H1 (cell line): ENCODE measurements at regions of chr3 and their contacts with region 1.

Region 1: DNA sequence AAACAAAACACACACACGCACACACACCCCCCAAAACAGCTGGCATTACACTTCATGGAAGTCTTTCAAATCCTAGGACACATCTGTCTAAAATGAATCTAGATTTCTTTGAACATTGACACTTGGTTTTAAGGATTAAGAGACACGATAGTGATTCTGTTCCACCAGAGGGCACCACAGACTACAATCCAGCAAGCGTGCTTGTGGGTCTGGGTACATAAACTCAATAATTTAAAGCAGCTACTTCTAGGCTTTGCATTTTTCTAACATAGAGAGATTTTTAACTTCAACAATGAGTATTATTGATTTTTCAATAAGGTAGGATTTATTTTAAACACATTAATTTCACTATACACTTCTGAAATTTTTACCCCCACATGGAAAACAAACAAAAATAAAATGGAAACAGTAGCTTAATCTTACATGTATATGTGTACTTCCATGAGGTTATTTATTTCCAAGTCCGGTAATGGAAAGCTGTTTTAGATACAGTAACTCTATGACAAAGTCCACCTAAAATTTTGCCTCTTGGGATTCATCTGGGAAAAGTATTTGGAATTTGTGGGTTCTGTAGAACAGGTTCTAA is 564.0 kb upstream of the TGFBR2 start:
- DNase-seq: peak in 1 of 2 experiments; percentile 57
- H3K4me3 ChIP-seq: no peak overlapping the region
- H3K27ac ChIP-seq: no peak overlapping the region
- H3K4me1 ChIP-seq: peaks cover 0 to 5% (median 0%) of the 10 kb centered on the region in 4 experiments; a peak in 2 of 7 replicates
- H3K27me3 ChIP-seq: no peaks in the 10 kb centered on the region
- CTCF ChIP-seq: peak in 2 of 3 experiments; percentile 68 to 70; a peak in 3 of 4 replicates
- EP300 ChIP-seq: no peak
- POLR2A ChIP-seq: no peak
- RAD21 ChIP-seq: peak; percentile 90 to 93

Region 2: GRCh38 chr3:29577250-29577649 is 465.1 kb before region 1 on chr3:
- CTCF ChIA-PET with region 1: no interaction called
- POLR2A ChIA-PET with region 1: no interaction called
- DNase-seq: no peak
- H3K4me3 ChIP-seq: no peak overlapping the region
- H3K27ac ChIP-seq: no peak overlapping the region
- H3K4me1 ChIP-seq: no peaks in the 10 kb centered on the region
- H3K27me3 ChIP-seq: no peaks in the 10 kb centered on the region
- CTCF ChIP-seq: no peak
- EP300 ChIP-seq: no peak
- POLR2A ChIP-seq: no peak
- RAD21 ChIP-seq: no peak

Region 3: DNA sequence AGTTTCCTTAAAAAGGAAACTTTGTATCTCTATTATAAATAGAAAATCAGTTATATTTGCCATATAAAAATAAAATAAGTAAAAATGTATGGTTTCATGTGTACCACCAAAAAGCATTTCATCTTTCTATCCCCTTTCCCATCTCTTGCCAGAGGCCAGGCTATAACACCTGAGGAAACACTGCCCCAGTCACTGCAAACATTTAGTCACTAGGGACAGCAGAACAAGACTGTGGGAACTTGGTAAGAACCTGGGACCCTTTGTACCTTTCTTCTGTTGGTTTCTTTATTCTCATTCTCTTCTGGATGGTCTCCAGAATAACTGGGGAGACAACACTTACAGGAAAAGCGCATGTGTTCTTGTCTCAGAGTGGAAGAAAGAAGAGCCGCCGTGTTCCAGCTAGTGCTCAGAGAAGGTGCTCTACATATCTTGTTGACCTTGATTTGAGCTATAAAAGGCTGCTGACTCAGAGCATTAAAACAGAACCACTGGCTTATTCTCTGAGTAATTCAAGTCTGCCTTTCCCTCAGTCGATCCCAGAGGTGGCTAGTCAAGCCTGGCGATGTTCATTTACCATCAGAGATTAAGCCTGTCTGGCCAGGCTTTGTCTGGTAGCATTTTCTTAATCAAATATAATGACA is 399.9 kb before region 1 on chr3:
- CTCF ChIA-PET with region 1: no interaction called
- POLR2A ChIA-PET with region 1: no interaction called
- DNase-seq: no peak
- H3K4me3 ChIP-seq: no peak overlapping the region
- H3K27ac ChIP-seq: no peak overlapping the region
- H3K4me1 ChIP-seq: peaks cover 0 to 8% (median 0%) of the 10 kb centered on the region in 4 experiments; a peak in 2 of 7 replicates
- H3K27me3 ChIP-seq: no peaks in the 10 kb centered on the region
- CTCF ChIP-seq: no peak
- EP300 ChIP-seq: no peak
- POLR2A ChIP-seq: no peak
- RAD21 ChIP-seq: no peak

Region 4: GRCh38 chr3:29955413-29955812 is 87.0 kb before region 1 on chr3:
- CTCF ChIA-PET with region 1: no interaction called
- POLR2A ChIA-PET with region 1: no interaction called
- DNase-seq: no peak
- H3K4me3 ChIP-seq: no peak overlapping the region
- H3K27ac ChIP-seq: no peak overlapping the region
- H3K4me1 ChIP-seq: no peaks in the 10 kb centered on the region
- H3K27me3 ChIP-seq: no peaks in the 10 kb centered on the region
- CTCF ChIP-seq: no peak
- EP300 ChIP-seq: no peak
- POLR2A ChIP-seq: no peak
- RAD21 ChIP-seq: no peak

Region 5: DNA sequence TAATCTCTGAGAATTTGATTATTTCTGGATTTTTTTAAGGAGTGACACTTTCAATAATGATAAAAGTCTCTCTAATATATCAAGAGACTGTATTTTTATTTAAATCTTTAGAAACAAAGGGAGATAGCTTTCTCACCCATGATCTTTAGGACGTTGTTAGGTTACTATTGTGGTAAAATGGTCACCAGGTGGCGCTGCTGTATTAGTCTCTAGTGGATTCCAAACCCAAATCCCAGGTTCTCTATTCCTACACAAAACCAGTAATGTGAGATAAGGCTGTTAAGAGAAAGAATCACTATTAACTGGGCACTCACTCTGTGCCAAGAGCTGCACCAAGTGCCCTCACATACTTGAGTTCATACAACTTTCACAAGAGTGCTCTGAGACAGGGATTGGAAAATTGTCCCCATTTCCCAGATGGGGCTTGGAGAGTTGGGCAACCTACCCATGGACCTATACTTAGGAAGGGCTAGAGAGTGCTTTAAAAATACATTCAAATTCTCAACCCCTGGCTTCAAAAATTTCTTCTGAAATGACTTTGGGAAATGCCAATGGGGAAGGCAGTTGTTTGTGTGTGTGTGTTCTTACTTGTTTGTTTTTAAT is 29.3 kb before region 1 on chr3:
- CTCF ChIA-PET with region 1: interaction called, 13 read pairs
- POLR2A ChIA-PET with region 1: no interaction called
- DNase-seq: peak in 1 of 2 experiments; percentile 85
- H3K4me3 ChIP-seq: no peak overlapping the region
- H3K27ac ChIP-seq: no peak overlapping the region
- H3K4me1 ChIP-seq: no peaks in the 10 kb centered on the region
- H3K27me3 ChIP-seq: no peaks in the 10 kb centered on the region
- CTCF ChIP-seq: peak in 2 of 3 experiments; percentile 57 to 64; a peak in 3 of 4 replicates
- EP300 ChIP-seq: no peak
- POLR2A ChIP-seq: no peak
- RAD21 ChIP-seq: peak; percentile 83 to 89

Region 6: DNA sequence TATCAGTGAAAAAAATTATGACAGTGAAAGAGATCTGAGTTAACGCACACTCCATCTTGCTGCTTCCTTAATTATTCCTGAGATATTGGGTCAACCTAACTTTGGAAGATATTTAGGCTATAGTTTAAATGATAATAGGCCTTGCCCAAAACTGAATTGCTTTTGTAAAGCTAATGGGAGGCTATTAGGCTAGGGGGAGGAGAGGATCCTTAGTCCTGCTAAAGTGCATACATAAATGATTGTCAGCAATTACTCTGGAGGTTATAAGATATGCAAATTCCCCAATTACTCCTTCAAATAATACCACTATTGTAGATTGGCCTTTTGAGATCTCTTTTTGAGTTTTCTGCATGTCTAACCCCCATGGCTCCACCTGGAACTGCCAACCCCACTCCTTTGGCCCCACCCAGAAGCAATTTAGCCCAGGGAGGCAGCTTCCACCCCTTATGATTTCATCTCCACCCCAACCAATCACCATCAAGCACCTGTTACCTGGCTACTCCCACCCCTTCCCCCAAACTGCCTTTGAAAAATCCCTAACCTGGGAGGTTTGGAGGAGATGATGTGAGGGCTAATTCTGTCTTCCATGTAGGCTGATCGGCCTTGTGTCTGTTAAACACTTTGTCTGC is 54.8 kb after region 1 on chr3:
- CTCF ChIA-PET with region 1: interaction called, 12 read pairs
- POLR2A ChIA-PET with region 1: no interaction called
- DNase-seq: no peak
- H3K4me3 ChIP-seq: no peak overlapping the region
- H3K27ac ChIP-seq: no peak overlapping the region
- H3K4me1 ChIP-seq: peaks cover 0 to 4% (median 0%) of the 10 kb centered on the region in 4 experiments; a peak in 1 of 7 replicates
- H3K27me3 ChIP-seq: no peaks in the 10 kb centered on the region; a peak in 1 of 7 replicates
- CTCF ChIP-seq: no peak
- EP300 ChIP-seq: no peak
- POLR2A ChIP-seq: no peak
- RAD21 ChIP-seq: no peak

Region 7: DNA sequence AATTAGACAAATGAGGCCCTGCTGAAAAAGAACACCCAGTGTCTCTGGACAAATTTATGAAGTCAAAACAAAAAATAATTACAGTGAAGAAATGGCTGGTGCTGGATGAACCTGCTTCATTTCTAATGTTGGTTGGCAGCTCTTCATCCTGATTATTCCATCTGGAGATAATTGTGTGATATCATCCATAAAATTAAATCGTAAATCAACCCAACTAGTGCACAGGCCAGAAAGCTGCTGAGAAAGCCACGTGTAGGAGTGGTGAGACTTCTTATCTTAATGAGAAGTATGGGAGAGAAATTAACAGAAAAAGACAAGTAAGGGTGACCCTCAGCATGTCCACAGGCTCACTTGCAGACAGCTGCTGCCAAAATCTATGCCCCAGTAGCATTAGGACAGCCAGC is 98.8 kb after region 1 on chr3:
- CTCF ChIA-PET with region 1: no interaction called
- POLR2A ChIA-PET with region 1: no interaction called
- DNase-seq: no peak
- H3K4me3 ChIP-seq: no peak overlapping the region
- H3K27ac ChIP-seq: no peak overlapping the region
- H3K4me1 ChIP-seq: no peaks in the 10 kb centered on the region
- H3K27me3 ChIP-seq: no peaks in the 10 kb centered on the region
- CTCF ChIP-seq: no peak
- EP300 ChIP-seq: no peak
- POLR2A ChIP-seq: no peak
- RAD21 ChIP-seq: no peak

Region 8: GRCh38 chr3:30188713-30189112 is 146.3 kb after region 1 on chr3:
- CTCF ChIA-PET with region 1: interaction called, 16 read pairs
- POLR2A ChIA-PET with region 1: no interaction called
- DNase-seq: no peak
- H3K4me3 ChIP-seq: no peak overlapping the region
- H3K27ac ChIP-seq: no peak overlapping the region
- H3K4me1 ChIP-seq: no peaks in the 10 kb centered on the region
- H3K27me3 ChIP-seq: no peaks in the 10 kb centered on the region
- CTCF ChIP-seq: no peak
- EP300 ChIP-seq: no peak
- POLR2A ChIP-seq: no peak
- RAD21 ChIP-seq: no peak

Region 9: GRCh38 chr3:30751610-30752299 is 709.4 kb after region 1 on chr3:
- CTCF ChIA-PET with region 1: interaction called, 16 read pairs
- POLR2A ChIA-PET with region 1: no interaction called
- DNase-seq: peak in 1 of 2 experiments; percentile 63
- H3K4me3 ChIP-seq: no peak overlapping the region; a peak in 1 of 8 replicates
- H3K27ac ChIP-seq: no peak overlapping the region
- H3K4me1 ChIP-seq: peaks cover 0 to 15% (median 1%) of the 10 kb centered on the region in 4 experiments; a peak in 2 of 7 replicates
- H3K27me3 ChIP-seq: no peaks in the 10 kb centered on the region
- CTCF ChIP-seq: peak; percentile 10 to 58 (median 56)
- EP300 ChIP-seq: no peak
- POLR2A ChIP-seq: no peak
- RAD21 ChIP-seq: peak; percentile 77 to 88